MCF 10A (cell line): ENCODE measurements at regions of chr14 and their contacts with region 1.

Region 1: GRCh38 chr14:104865081-104865643 is at the start of gene CEP170B:
- DNase-seq: peak; percentile 35
- H3K4me3 Mint-ChIP-seq: peak within 1 kb of the TSS; percentile 89
- H3K27ac Mint-ChIP-seq: peak within 1 kb of the TSS; percentile 90
- H3K4me1 Mint-ChIP-seq: peaks cover 15% of the 10 kb centered on the region
- H3K27me3 Mint-ChIP-seq: no peaks in the 10 kb centered on the region
- CTCF ChIP-seq: no peak
- total RNA-seq, gene CEP170B: 61.8 and 77.4 TPM in 2 replicates

Region 2: DNA sequence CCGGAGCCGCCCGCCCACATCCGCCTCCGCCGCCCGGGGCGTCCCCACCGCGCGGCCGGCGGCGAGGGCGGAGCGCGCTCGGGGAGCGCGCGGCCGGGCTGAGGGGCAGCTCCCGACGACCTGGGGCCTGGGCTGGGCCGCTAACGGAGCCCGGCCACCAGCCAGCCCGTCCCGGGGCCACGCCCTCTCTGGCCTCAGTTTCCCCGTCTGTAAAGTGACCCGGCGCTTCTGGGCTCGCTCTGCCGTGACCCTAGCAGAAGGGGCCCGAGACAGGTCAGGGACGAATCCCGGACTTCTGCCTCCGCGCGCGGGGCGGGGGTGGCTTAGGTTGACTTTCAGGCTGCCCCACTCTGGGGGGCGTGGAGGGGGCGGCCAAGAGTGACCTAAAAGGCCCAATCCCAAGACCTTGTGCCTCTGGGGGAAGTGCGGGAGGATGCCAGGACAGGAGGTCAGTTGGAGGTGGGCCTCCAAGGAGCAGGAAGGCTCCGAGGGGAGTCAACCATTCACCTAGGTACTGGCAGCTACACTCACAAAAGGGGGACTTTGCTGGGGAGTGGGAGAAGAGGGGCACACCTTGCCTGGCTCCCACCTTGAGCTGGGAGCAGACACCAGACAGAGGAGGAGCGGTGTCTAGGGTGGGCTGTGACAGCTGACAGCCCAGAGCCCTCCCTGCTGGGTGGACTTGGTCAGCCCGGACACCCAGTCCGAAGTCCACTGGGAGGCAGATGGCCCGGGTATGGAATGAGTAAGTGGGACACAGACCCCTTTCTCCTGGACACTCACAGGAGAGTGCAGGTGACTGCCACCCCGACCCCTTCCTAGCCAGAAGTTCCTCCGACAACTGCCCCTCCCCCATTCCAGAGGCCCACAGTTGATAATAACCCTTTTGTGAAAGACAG is 69.1 kb before region 1 on chr14:
- CTCF ChIA-PET with region 1: no interaction called
- POLR2A ChIA-PET with region 1: interaction called, 10 read pairs
- intact Hi-C with region 1: no loop called
- DNase-seq: peak; percentile 48
- H3K4me3 Mint-ChIP-seq: peak overlapping the region; percentile 85
- H3K27ac Mint-ChIP-seq: no peak overlapping the region
- H3K4me1 Mint-ChIP-seq: peaks cover 32% of the 10 kb centered on the region
- H3K27me3 Mint-ChIP-seq: no peaks in the 10 kb centered on the region
- CTCF ChIP-seq: no peak

Region 3: GRCh38 chr14:104852280-104852663 is 12.9 kb before region 1 on chr14:
- CTCF ChIA-PET with region 1: no interaction called
- POLR2A ChIA-PET with region 1: interaction called, 10 read pairs
- intact Hi-C with region 1: no loop called
- DNase-seq: no peak
- H3K4me3 Mint-ChIP-seq: no peak overlapping the region
- H3K27ac Mint-ChIP-seq: no peak overlapping the region
- H3K4me1 Mint-ChIP-seq: no peaks in the 10 kb centered on the region
- H3K27me3 Mint-ChIP-seq: no peaks in the 10 kb centered on the region
- CTCF ChIP-seq: no peak